ENCODE measurements at regions of chr12 and their contacts with region 1.

Region 1: DNA sequence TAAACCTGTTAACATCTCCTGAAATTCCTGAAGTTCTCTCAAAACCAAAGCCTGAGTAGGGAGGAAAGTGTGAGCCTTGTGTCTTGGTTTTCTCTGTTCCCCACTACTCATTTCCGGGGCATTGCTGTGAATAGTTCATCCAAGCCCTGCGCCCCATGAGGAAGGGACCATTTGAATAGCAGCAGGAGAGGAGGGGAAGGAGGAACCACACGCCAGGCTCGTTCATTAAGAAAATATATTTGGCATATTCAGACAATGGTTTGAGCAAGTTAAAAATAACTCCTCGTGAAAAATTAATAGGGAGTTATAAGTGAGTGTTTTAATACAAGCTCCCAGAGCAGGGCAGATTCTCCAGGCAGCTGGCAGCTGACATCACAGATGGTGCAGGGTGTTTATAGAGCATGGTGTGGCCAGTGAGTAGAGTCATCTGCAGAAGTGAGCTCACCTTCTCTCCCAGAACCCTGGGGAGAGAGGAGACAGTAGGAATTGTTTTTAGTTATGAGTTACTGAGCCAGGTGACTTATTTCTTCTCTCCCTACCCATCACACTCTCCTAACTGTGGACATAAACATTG is 29.5 kb upstream of the CISTR start:
- DNase-seq: peak; percentile 58
- H3K4me3 ChIP-seq: no peak overlapping the region
- H3K27ac ChIP-seq: peak overlapping the region; percentile 47
- H3K4me1 ChIP-seq: peaks cover 17% of the 10 kb centered on the region
- H3K27me3 ChIP-seq: no peaks in the 10 kb centered on the region
- CTCF ChIP-seq: no peak

Region 2: GRCh38 chr12:53938326-53939140 is 157.2 kb after region 1 on chr12 and contains the start of gene HOXC13:
- CTCF ChIA-PET with region 1: no interaction called
- POLR2A ChIA-PET with region 1: no interaction called
- intact Hi-C with region 1: loop called (anchors 5 kb)
- DNase-seq: peak; percentile 100
- H3K4me3 ChIP-seq: peak within 1 kb of the TSS; percentile 79
- H3K27ac ChIP-seq: peak within 1 kb of the TSS; percentile 70
- H3K4me1 ChIP-seq: peaks cover 13% of the 10 kb centered on the region
- H3K27me3 ChIP-seq: no peaks in the 10 kb centered on the region
- CTCF ChIP-seq: no peak
- total RNA-seq, gene HOXC13: 10.1 and 10.7 TPM in 2 replicates